ENCODE measurements at regions of chr2 and their contacts with region 1.

Region 1: DNA sequence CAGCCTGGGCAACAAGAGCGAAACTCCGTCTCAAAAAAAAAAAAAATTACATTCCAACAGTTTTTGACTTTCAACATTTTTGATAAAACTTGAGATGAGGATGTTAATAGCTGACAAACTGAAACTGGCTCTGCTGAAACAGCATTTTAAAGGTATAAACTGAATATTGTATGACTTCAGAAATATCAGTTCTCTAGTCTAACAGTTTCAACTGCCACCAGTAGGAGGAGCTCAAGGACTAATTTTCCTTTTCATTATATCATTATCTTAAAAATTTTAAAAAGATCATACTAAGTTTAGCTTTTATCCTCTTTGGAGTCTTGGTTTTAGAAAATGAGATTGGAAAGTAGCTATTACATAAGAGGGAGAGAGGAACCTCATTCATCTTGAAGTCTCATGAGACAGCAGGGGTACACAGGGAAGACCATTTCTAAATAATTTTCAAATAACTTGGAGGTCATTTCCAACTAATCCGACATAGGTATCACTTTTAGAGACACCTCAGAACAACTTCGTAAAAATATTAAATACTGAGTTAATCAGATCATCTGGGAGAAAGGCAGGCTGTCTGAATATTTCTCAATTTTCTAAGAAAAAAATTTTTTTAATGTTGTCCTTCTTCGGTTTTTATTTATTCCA is 37.6 kb upstream of the MCM6 start:
- DNase-seq: peak; percentile 15
- H3K4me3 ChIP-seq: no peak overlapping the region
- H3K27ac ChIP-seq: no peak overlapping the region
- H3K4me1 ChIP-seq: no peaks in the 10 kb centered on the region
- H3K27me3 ChIP-seq: no peaks in the 10 kb centered on the region
- CTCF ChIP-seq: peak; percentile 58 to 70

Region 2: DNA sequence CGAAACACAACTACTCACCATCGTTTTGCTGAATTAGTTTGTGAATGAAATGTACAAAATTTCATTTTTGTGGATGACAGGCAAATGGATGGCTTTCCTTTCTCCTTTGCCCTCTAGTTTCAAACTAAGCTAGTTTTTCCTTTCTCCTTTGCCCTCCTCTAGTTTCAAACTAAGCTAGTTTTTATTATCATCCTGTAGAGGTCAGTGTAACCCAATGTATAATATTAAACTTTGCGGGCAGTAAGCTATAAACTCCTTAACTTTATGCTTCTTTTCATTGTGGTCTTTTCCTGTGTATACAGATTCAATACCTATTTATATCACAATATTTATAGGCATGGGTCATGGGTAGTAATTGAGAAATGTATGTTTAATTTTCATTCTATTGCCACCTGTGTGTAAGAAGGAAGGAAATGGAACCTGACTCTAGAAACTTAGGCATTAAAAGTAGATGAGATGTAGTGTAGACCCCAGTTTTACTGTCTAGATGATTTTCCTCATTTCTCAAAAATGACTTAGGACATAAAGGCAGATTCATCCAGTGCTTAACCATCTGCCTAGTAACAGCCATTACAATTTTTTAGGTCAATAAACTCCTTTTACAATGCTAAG is 924.7 kb before region 1 on chr2:
- CTCF ChIA-PET with region 1: no interaction called
- dilution Hi-C with region 1: no loop called
- in situ Hi-C with region 1: no loop called
- intact Hi-C with region 1: loop called (anchors 5 kb)
- DNase-seq: peak; percentile 5
- H3K4me3 ChIP-seq: no peak overlapping the region
- H3K27ac ChIP-seq: no peak overlapping the region
- H3K4me1 ChIP-seq: no peaks in the 10 kb centered on the region
- H3K27me3 ChIP-seq: peaks cover 5% of the 10 kb centered on the region
- CTCF ChIP-seq: peak; percentile 29 to 48

Region 3: DNA sequence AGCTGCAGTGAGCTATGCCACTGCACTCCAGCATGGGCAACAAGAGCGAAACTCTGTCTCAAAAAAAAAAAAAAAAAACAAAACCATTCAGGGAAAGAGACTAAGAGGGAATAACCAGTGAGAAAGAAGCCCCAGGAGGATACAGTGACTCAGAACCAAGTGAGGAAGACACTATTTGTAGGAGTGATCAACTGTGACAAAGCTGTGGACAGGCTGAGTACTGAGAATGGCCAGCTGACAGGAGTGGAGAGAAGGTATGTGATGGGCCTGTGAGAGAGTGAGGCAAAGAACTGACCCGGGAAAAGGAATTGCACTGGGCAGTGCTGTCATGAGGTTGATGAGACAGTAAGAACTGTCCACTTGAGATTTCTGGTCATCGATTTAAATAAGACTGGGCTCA is 70.2 kb before region 1 on chr2:
- CTCF ChIA-PET with region 1: interaction called, 10 read pairs
- dilution Hi-C with region 1: no loop called
- in situ Hi-C with region 1: no loop called
- intact Hi-C with region 1: no loop called
- DNase-seq: no peak
- H3K4me3 ChIP-seq: no peak overlapping the region
- H3K27ac ChIP-seq: no peak overlapping the region
- H3K4me1 ChIP-seq: no peaks in the 10 kb centered on the region
- H3K27me3 ChIP-seq: no peaks in the 10 kb centered on the region
- CTCF ChIP-seq: no peak

Region 4: GRCh38 chr2:135931776-135932443 is 18.1 kb after region 1 on chr2:
- CTCF ChIA-PET with region 1: no interaction called
- dilution Hi-C with region 1: no loop called
- in situ Hi-C with region 1: no loop called
- intact Hi-C with region 1: no loop called
- DNase-seq: no peak
- H3K4me3 ChIP-seq: no peak overlapping the region
- H3K27ac ChIP-seq: no peak overlapping the region
- H3K4me1 ChIP-seq: no peaks in the 10 kb centered on the region
- H3K27me3 ChIP-seq: no peaks in the 10 kb centered on the region
- CTCF ChIP-seq: no peak

Region 5: DNA sequence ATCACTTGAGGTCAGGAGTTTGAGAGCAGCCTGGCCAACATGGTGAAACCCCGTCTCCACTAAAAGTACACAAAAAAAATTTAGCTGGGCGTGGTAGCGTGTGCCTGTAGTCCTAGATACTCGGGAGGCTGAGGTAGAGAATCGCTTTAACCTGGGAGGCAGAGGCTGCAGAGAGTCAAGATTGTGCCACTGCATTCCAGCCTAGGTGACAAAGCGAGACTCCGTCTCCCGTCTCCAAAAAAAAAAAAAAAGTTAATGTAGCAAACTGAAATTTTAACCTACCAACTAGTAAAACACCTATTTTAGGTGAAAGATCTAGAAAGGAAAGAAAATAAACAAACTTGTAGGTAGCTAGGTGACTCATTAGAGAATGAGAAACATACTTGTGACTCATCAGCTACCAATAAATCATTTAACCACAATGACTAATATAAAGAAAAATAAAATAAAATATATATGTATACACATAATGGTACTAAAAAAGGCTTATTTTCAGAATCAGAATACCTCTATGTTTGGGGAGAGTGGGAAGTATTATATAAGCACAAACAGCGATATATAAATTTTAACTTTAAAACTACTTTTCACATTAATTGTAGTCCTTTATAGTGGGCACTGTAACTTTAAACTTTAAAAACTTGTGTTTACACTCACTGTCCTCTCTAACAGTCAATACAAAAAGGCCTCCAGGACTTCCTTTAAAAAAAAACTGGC is 35.0 kb after region 1 on chr2:
- CTCF ChIA-PET with region 1: no interaction called
- dilution Hi-C with region 1: no loop called
- in situ Hi-C with region 1: no loop called
- intact Hi-C with region 1: no loop called
- DNase-seq: peak; percentile 90
- H3K4me3 ChIP-seq: peak overlapping the region; percentile 8 to 41 (median 31)
- H3K27ac ChIP-seq: peak overlapping the region; percentile 99
- H3K4me1 ChIP-seq: peaks cover 10% of the 10 kb centered on the region
- H3K27me3 ChIP-seq: no peaks in the 10 kb centered on the region
- CTCF ChIP-seq: no peak

Region 6: GRCh38 chr2:136086253-136087016 is 172.6 kb after region 1 on chr2:
- CTCF ChIA-PET with region 1: no interaction called
- dilution Hi-C with region 1: no loop called
- in situ Hi-C with region 1: no loop called
- intact Hi-C with region 1: no loop called
- DNase-seq: no peak
- H3K4me3 ChIP-seq: no peak overlapping the region
- H3K27ac ChIP-seq: no peak overlapping the region
- H3K4me1 ChIP-seq: no peaks in the 10 kb centered on the region
- H3K27me3 ChIP-seq: no peaks in the 10 kb centered on the region
- CTCF ChIP-seq: no peak

Region 7: GRCh38 chr2:136378712-136379595 is 465.1 kb after region 1 on chr2:
- CTCF ChIA-PET with region 1: interaction called, 8 read pairs
- dilution Hi-C with region 1: no loop called
- in situ Hi-C with region 1: loop called (anchors 5 kb)
- intact Hi-C with region 1: loop called (anchors 1 kb)
- DNase-seq: peak; percentile 21
- H3K4me3 ChIP-seq: no peak overlapping the region
- H3K27ac ChIP-seq: no peak overlapping the region
- H3K4me1 ChIP-seq: peaks cover 14% of the 10 kb centered on the region
- H3K27me3 ChIP-seq: peaks cover 2% of the 10 kb centered on the region
- CTCF ChIP-seq: peak; percentile 77 to 87

Region 8: GRCh38 chr2:136384531-136385303 is 470.9 kb after region 1 on chr2:
- CTCF ChIA-PET with region 1: interaction called, 8 read pairs
- dilution Hi-C with region 1: no loop called
- in situ Hi-C with region 1: loop called (anchors 5 kb)
- intact Hi-C with region 1: loop called (anchors 1 kb)
- DNase-seq: peak; percentile 40
- H3K4me3 ChIP-seq: no peak overlapping the region
- H3K27ac ChIP-seq: no peak overlapping the region
- H3K4me1 ChIP-seq: no peaks in the 10 kb centered on the region
- H3K27me3 ChIP-seq: peaks cover 2% of the 10 kb centered on the region
- CTCF ChIP-seq: peak; percentile 58 to 64